ENCODE measurements at regions of chr10 and their contacts with region 1.

Region 1: DNA sequence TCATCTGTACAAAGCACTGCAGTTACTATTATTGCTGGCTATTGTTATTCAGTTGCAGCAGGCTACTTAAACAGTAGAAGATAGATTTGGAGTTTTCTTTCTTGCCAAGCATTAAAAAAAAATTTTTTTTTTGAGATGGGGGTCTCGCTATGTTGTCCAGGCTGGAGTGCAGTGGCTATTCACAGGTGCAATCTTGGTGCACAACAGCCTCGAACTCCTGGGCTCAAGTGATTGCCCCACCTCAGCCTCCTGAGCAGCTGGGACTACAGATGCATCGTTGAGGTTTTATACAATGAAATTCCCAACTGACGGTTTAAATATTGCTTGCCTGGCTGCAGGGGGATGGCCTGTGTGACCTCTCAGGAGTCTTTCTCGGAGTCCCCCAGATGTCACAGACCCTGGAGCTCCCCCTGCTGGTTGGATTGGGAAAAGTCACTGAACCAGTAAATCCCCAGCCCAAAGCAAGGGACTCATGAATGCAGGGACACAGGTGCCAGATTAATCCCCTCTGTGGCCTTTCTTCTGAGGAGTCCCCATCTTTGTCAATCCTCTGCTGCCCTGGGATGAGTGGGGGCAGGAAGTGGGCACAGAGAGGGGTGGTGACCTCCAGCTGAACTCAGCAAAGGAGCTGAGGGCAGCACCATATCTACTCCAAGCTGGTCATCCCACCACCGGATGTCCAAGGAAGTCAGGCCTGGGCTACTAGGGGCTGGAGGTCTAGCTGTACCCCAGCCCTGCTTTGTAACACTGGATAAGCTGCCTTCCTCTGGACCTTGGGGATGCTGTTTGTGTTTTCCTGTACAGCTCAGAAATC is 149.6 kb downstream of the C10orf105 start:
- DNase-seq: peak; percentile 86
- CTCF ChIP-seq: peak; percentile 73

Region 2: DNA sequence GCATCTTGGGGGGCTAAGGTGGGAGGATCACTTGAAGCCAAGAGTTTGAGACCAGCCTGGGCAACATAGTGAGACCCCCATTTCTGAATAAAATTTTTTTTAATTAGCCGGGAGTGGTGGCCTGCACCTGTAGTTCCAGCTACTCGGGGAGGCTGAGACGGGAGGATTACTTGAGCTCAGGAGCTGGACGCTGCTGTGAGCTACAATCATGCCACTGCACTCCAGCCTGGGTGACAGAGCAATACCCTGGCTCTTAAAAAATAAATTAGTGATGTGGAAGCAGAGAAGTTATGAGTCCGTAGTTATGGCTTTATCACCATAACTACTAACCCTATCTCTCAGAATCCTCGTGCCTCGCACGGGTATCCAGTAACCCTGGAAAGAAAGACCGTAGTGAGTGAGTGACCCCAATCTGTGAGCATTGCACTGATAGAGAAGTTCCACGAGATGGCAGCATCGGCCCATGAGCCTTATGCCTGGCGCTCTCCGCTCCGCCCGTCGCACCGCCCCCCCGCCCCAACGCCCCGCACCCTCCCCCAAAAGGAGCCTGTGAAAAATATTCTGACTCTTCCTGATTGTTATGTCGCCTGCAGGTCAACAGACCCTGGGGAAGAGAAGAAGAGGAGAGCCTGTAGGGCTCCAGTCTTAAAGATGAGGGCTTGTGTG is 255.8 kb before region 1 on chr10:
- in situ Hi-C with region 1: loop called (anchors 5 kb)
- DNase-seq: peak; percentile 86
- CTCF ChIP-seq: peak; percentile 76

Measured in GM13976 (cell line).